Activated CD4-positive, alpha-beta T cell treated with anti-CD3 and anti-CD28 coated beads, Interleukin-2, amount 10 ng/mL, durations not matched to agents 24 days and 14 days (primary cell): ENCODE measurements at regions of chr21 and their contacts with region 1.

Region 1: GRCh38 chr21:36310016-36310415 is 10.0 kb upstream of the MORC3 start:
- DNase-seq: peak; percentile 70
- H3K4me3 Mint-ChIP-seq: no peak overlapping the region
- H3K27ac Mint-ChIP-seq: peak overlapping the region; percentile 43
- H3K4me1 Mint-ChIP-seq: peaks cover 3% of the 10 kb centered on the region
- H3K27me3 Mint-ChIP-seq: peaks cover 1% of the 10 kb centered on the region

Region 2: GRCh38 chr21:36035381-36035791 is 274.6 kb before region 1 on chr21:
- intact Hi-C with region 1: no loop called
- DNase-seq: no peak
- H3K4me3 Mint-ChIP-seq: no peak overlapping the region
- H3K27ac Mint-ChIP-seq: no peak overlapping the region
- H3K4me1 Mint-ChIP-seq: peaks cover 4% of the 10 kb centered on the region
- H3K27me3 Mint-ChIP-seq: no peaks in the 10 kb centered on the region

Region 3: GRCh38 chr21:36288651-36289243 is 21.3 kb before region 1 on chr21:
- intact Hi-C with region 1: loop called (anchors 1 kb)
- DNase-seq: no peak
- H3K4me3 Mint-ChIP-seq: peak overlapping the region; percentile 65
- H3K27ac Mint-ChIP-seq: peak overlapping the region; percentile 89
- H3K4me1 Mint-ChIP-seq: peaks cover 18% of the 10 kb centered on the region
- H3K27me3 Mint-ChIP-seq: no peaks in the 10 kb centered on the region

Region 4: GRCh38 chr21:36297921-36298594 is 12.0 kb before region 1 on chr21:
- intact Hi-C with region 1: loop called (anchors 1 kb)
- DNase-seq: peak; percentile 93
- H3K4me3 Mint-ChIP-seq: peak overlapping the region; percentile 74
- H3K27ac Mint-ChIP-seq: peak overlapping the region; percentile 84
- H3K4me1 Mint-ChIP-seq: peaks cover 27% of the 10 kb centered on the region
- H3K27me3 Mint-ChIP-seq: no peaks in the 10 kb centered on the region